IMR-90 (cell line): ENCODE measurements at regions of chr15 and their contacts with region 1.

Region 1: GRCh38 chr15:59528965-59529402 is 82.6 kb upstream of the GCNT3 start:
- DNase-seq: peak; percentile 81
- ATAC-seq: peak; percentile 100
- H3K4me3 ChIP-seq: no peak overlapping the region
- H3K27ac ChIP-seq: no peak overlapping the region
- H3K4me1 ChIP-seq: no peaks in the 10 kb centered on the region
- H3K27me3 ChIP-seq: peaks cover 8% of the 10 kb centered on the region
- CTCF ChIP-seq: peak; percentile 88
- POLR2A ChIP-seq: no peak
- RAD21 ChIP-seq: peak; percentile 88

Region 2: DNA sequence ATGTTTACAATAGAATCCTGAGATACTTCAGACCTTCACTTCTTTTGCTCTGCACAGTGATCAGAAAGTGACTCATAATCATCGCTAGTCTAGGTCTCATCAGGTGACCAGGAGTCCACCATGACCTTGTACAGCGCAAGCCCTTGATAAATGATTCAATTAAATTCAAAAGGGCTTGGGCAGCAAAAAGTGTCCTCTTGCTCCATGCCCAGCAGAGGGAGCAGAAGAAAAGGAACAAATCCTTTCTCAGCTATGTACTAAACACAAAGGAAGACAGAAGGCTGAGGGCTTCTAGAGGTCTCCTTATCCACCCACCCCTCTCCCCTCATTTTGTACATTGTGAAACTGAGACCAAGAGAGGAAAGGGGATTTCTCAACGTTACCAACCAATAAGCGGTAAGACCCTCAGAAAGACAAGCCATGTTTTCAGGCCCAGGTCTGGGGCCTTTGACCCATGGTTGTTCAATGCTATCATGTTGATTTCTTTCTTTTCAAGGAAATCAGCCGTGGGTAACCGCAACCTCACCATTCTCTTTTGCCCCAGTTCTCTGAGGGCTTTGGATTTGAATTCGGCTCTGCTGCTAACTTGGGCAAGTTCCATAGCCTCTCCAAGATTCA is 1316.0 kb before region 1 on chr15:
- CTCF ChIA-PET with region 1: no interaction called
- POLR2A ChIA-PET with region 1: no interaction called
- dilution Hi-C with region 1: no loop called
- in situ Hi-C with region 1: no loop called
- intact Hi-C with region 1: loop called (anchors 10 kb)
- DNase-seq: peak; percentile 55
- ATAC-seq: peak; percentile 92
- H3K4me3 ChIP-seq: no peak overlapping the region
- H3K27ac ChIP-seq: no peak overlapping the region
- H3K4me1 ChIP-seq: no peaks in the 10 kb centered on the region
- H3K27me3 ChIP-seq: no peaks in the 10 kb centered on the region
- CTCF ChIP-seq: peak; percentile 62
- POLR2A ChIP-seq: no peak
- RAD21 ChIP-seq: peak; percentile 54

Region 3: DNA sequence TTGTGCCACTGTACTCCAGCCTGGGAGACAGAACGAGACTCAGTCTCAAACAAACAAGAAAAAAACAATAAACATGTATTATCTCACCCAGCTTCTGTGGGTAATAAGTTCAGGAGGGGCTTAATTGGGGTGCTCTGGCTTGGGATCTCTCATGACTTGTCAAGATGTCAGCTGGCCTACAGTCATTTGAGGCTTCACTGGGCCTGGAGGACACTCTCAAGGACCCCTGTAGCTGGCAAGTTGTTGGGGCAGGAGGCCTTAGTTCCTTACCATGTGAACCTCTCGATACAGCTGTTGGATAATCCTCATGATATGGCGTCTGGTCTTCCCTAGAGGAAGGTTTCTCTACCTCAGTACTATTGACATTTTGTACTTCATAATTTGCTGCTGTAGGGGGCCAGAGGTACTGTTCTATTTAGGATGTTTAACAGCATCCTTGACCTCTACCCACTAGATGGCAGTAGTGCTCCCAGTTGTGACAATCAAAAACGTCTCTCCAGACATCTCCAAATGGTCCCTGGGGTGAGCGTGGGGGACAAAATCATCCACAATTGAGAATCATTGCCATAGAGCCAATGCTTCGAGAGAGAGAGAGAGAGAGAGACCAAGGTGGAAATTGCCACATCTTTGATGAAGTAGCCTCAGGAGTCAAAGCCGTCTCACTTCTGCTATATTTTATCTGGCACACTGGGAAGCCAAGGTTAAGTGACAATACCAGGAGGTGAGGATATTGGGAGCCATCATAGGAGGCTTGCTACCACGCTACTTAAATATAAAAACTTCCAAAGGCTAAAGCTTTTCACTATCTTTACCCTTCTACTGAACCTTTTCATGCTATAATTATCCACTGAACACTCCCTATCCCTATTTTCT is 571.6 kb before region 1 on chr15:
- CTCF ChIA-PET with region 1: interaction called, 5 read pairs
- POLR2A ChIA-PET with region 1: no interaction called
- dilution Hi-C with region 1: no loop called
- in situ Hi-C with region 1: no loop called
- intact Hi-C with region 1: loop called (anchors 5 kb)
- DNase-seq: peak; percentile 58
- ATAC-seq: peak; percentile 93
- H3K4me3 ChIP-seq: no peak overlapping the region
- H3K27ac ChIP-seq: no peak overlapping the region
- H3K4me1 ChIP-seq: no peaks in the 10 kb centered on the region
- H3K27me3 ChIP-seq: no peaks in the 10 kb centered on the region
- CTCF ChIP-seq: peak; percentile 76
- POLR2A ChIP-seq: no peak
- RAD21 ChIP-seq: peak; percentile 60

Region 4: DNA sequence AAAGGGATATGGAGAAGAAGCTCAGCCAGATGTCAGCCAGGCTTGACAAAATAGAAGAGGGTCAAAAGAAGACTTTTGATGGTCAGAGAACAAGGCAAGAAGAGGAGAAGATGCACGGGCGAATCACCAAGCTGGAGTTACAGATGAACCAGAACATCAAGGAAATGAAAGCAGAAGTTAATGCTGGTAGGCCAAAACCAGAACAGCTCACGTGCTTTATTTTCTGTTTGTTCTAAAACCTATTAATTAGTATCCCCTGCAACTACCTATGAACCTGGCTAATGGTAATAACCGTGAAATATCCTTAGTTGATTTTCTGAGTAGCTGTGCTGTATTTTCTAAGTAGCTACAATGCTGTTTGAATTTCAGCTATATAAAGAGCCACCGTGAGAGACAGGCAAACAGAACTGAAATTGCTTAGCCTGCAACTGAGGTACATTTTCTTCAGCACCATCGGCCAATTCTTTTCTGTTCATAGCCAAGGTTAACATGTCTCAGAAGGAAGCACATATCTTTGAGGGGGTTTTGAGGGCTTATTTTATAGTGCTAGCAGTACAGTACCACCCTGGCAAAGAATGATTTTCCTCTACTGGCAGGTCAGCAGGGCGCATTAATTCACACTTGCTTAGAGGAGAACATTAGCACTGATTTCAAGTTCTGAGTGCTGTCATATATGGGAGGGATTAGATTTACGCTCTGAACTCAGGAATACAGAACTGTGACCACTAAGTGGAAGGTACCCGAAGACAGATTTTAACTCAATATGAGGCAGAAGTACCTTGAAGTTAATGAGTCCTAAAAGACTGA is 12.1 kb before region 1 on chr15:
- CTCF ChIA-PET with region 1: interaction called, 16 read pairs
- POLR2A ChIA-PET with region 1: no interaction called
- dilution Hi-C with region 1: no loop called
- in situ Hi-C with region 1: no loop called
- intact Hi-C with region 1: no loop called
- DNase-seq: no peak
- ATAC-seq: no peak
- H3K4me3 ChIP-seq: no peak overlapping the region
- H3K27ac ChIP-seq: no peak overlapping the region
- H3K4me1 ChIP-seq: no peaks in the 10 kb centered on the region
- H3K27me3 ChIP-seq: peaks cover 10% of the 10 kb centered on the region
- CTCF ChIP-seq: no peak
- POLR2A ChIP-seq: no peak
- RAD21 ChIP-seq: no peak

Region 5: DNA sequence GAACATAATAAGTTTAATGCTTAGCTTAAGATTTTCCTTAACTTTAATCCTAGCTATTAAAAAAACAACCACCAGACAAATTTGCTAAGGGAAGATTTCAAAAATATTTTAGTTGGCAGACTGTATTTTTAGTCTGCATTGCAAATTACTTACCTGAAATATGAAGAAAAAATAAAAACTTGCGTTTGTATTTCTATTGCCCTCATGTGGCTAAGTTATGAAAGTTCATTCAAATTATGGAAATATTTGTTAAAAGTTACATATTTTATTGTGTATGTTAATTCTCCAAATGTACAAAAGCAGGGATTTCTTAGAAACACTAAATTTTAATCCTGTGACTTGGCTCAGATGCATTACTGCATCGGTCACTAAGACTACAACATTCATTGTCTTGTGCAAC is 113.4 kb after region 1 on chr15:
- CTCF ChIA-PET with region 1: interaction called, 5 read pairs
- POLR2A ChIA-PET with region 1: no interaction called
- dilution Hi-C with region 1: no loop called
- in situ Hi-C with region 1: no loop called
- intact Hi-C with region 1: loop called (anchors 5 kb)
- DNase-seq: no peak
- ATAC-seq: no peak
- H3K4me3 ChIP-seq: no peak overlapping the region
- H3K27ac ChIP-seq: no peak overlapping the region
- H3K4me1 ChIP-seq: no peaks in the 10 kb centered on the region
- H3K27me3 ChIP-seq: no peaks in the 10 kb centered on the region
- CTCF ChIP-seq: no peak; the same call in 1 of the 2 replicates
- POLR2A ChIP-seq: no peak
- RAD21 ChIP-seq: no peak